Activated CD4-positive, alpha-beta T cell treated with anti-CD3 and anti-CD28 coated beads for 36 hours (primary cell): ENCODE measurements at regions of chr20 and their contacts with region 1.

Region 1: DNA sequence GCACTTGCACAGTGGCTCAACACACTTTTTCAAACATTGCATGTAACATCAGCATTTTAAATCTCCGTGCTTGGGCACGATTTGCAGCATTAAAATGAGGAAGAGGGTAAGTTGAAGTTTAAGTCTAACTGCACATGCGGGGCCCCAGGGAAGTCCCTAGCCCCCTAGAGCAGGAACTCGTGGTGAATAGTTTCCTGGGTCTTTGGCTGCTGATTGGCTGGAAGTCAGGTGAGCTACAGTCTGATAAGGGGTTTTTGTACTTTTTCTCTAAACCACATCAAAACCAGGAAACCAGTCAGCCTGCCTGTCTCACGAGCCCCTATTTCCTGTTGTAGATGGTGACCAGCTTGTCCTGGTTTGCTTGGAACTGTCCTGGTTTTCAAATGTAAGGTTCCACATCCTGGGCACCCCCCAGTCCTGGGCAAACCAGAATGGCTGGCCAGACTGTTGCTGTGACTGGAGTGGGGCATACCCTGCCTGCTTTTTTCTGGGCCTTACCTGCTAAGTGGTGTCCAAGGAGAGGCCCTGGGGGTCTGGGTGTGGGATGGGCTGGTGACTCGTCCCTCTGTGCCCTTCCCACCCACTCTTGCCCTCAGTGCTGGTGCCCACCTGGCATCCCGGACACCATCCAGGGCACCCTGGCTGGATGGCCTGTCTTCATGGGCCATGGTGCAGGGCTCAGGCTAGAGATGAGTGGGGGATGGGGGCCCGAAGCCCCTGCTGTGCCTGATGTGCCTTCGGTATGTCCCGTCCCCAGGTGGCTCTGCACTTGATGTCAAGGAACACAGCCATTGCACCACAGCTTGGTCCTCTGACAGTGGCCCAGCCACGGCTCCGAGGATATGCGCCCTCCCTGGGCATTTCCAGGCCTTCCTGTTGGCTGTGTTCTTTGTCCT is 31.8 kb downstream of the SUN5 start:
- DNase-seq: peak; percentile 88
- ATAC-seq: peak; percentile 70
- H3K4me3 Mint-ChIP-seq: no peak overlapping the region
- H3K27ac Mint-ChIP-seq: no peak overlapping the region
- H3K4me1 Mint-ChIP-seq: peaks cover 46% of the 10 kb centered on the region
- H3K27me3 Mint-ChIP-seq: no peaks in the 10 kb centered on the region

Region 2: DNA sequence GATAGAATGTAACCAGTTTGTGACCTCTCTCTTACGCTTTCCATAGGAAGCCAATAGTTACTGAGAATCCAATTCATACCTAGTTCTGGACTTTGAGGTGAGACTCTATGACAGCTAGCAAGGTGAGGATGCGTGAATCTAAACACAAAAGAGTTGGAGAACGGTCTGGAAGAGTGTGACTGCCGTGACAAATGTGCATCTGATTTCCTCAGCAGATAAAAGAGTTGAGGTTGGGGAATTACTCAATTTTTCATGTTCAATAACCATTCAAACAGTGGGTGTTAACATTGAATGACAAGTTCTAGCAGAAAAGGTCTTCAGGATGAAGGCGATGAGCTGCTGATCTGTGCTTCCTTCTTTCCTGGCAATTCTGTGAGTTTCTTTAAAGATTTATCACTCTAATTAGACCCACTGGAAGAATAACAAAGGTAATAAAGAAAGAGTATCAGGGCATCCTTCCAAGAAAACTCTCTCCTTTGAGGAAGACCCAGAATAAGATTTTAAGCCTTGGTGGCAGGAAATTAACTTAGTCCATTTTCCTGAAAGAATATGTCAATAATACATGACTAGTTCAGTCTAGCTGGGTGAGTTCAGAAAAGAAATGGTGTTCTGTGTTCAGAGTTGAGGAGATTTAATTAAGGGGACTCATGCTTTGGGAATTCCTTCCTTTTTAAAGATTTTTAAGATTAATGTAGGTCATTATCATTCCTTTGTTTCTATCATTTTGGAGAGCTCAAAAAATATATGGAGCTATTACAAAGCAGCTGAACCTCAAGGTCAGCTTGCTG is 670.5 kb before region 1 on chr20:
- CTCF ChIA-PET with region 1: no interaction called
- POLR2A ChIA-PET with region 1: no interaction called
- intact Hi-C with region 1: no loop called
- DNase-seq: no peak
- ATAC-seq: peak; percentile 68
- H3K4me3 Mint-ChIP-seq: peak overlapping the region; percentile 42
- H3K27ac Mint-ChIP-seq: peak overlapping the region; percentile 82
- H3K4me1 Mint-ChIP-seq: peaks cover 52% of the 10 kb centered on the region
- H3K27me3 Mint-ChIP-seq: no peaks in the 10 kb centered on the region

Region 3: DNA sequence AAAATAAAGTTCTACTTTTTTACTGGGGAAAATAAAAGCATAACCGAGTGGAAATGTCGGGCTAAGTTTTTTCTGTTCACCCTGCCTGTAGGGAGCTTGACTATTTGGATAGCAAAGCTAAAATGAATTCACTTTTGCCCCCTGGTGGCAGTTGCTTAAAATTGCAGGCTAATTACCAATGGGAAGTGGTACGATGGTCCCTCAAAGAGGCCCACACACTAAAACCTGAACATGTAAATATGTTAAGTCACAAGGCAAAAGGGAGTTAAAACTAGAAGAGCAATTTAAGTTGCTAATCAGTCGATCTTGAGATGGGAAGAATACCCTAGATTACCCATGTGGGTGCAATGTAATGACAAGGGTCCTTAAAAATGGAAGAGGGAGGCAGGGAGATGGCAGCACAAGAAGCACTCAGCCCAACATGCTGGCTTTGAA is 32.7 kb after region 1 on chr20:
- CTCF ChIA-PET with region 1: interaction called, 13 read pairs
- POLR2A ChIA-PET with region 1: no interaction called
- intact Hi-C with region 1: no loop called
- DNase-seq: peak; percentile 59
- ATAC-seq: peak; percentile 78
- H3K4me3 Mint-ChIP-seq: no peak overlapping the region
- H3K27ac Mint-ChIP-seq: no peak overlapping the region
- H3K4me1 Mint-ChIP-seq: peaks cover 14% of the 10 kb centered on the region
- H3K27me3 Mint-ChIP-seq: no peaks in the 10 kb centered on the region